Activated CD4-positive, alpha-beta memory T cell treated with anti-CD3 and anti-CD28 coated beads for 36 hours (primary cell): ENCODE measurements at regions of chr20 and their contacts with region 1.

Region 1: GRCh38 chr20:16761305-16761829 is 13.2 kb downstream of the OTOR start:
- DNase-seq: peak; percentile 49
- H3K4me3 Mint-ChIP-seq: no peak overlapping the region
- H3K27ac Mint-ChIP-seq: no peak overlapping the region
- H3K4me1 Mint-ChIP-seq: peaks cover 4% of the 10 kb centered on the region
- H3K27me3 Mint-ChIP-seq: peaks cover 11% of the 10 kb centered on the region

Region 2: DNA sequence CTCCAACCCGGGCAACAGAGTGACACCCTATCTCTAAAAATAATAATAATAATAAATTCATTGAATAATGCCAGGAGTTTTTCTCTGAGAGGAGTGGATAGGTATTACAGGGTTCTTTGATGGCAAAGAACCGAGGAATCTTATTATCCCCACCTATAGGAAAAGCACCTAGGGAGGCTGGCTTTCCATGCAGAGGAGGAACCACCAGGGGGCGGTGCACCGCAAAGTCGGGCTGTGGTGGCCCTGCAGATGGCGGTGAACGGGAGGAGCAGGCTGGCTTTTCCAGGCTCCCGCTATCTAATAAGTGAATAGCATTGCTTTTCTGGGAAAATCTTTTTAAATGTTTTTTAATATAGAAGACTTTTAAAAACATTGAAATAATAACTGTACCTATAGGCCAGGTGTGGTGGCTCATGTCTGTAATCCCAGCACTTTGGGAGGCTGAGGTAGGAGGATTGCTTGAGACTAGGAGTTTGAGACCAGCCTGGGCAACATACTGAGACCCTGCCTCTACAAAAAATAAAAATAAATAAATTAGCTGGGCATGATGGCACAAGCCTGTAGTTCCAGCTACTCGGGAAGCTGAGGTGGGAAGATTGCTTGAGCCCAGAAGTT is 1052.3 kb before region 1 on chr20:
- CTCF ChIA-PET with region 1: interaction called, 6 read pairs
- POLR2A ChIA-PET with region 1: no interaction called
- intact Hi-C with region 1: loop called (anchors 5 kb)
- DNase-seq: peak; percentile 52
- H3K4me3 Mint-ChIP-seq: no peak overlapping the region
- H3K27ac Mint-ChIP-seq: no peak overlapping the region
- H3K4me1 Mint-ChIP-seq: no peaks in the 10 kb centered on the region
- H3K27me3 Mint-ChIP-seq: no peaks in the 10 kb centered on the region

Region 3: GRCh38 chr20:16476032-16476431 is 285.3 kb before region 1 on chr20:
- CTCF ChIA-PET with region 1: interaction called, 4 read pairs
- POLR2A ChIA-PET with region 1: no interaction called
- intact Hi-C with region 1: loop called (anchors 5 kb)
- DNase-seq: no peak
- H3K4me3 Mint-ChIP-seq: no peak overlapping the region
- H3K27ac Mint-ChIP-seq: no peak overlapping the region
- H3K4me1 Mint-ChIP-seq: peaks cover 4% of the 10 kb centered on the region
- H3K27me3 Mint-ChIP-seq: no peaks in the 10 kb centered on the region

Region 4: DNA sequence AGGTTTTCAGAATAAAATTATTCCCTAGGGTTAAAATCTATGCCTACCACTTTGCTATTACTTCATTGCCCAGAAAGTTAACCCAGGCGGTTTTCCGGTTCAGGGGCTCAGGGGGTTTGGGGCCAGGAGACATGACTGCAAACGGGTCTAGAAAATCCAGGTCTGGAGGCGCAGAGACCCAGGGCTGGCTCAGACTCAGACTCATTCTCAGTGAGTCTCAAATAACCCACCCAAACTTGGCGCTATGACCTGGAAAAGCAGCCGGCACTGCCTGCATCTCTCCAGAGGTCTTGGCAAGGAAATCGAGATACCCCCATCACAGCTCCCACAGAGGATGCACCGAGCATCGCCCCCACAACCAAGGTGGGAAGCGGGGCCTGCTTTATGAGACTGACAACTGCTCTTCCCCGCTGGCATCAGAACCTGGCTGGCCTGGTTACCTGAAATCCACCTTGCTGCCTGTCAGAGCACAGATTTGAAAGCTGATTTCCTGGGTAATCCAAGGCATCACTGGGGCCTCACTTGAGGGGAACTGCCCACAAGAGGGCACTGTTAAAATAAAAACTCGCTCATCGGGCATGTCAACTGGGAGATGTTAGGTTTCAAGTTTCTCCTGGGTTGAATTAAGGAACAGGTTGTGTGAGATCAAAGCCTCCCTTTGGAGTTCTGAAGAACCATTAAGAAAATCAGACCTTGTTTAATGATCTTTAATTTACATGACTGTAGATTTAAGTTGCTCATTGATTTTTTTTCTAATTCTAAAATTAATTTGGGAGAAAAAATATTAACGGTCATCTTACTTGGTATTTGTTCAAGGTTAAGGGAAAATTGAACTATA is 243.2 kb before region 1 on chr20:
- CTCF ChIA-PET with region 1: interaction called, 35 read pairs
- POLR2A ChIA-PET with region 1: no interaction called
- intact Hi-C with region 1: loop called (anchors 2 kb)
- DNase-seq: peak; percentile 37
- H3K4me3 Mint-ChIP-seq: no peak overlapping the region
- H3K27ac Mint-ChIP-seq: no peak overlapping the region
- H3K4me1 Mint-ChIP-seq: no peaks in the 10 kb centered on the region
- H3K27me3 Mint-ChIP-seq: no peaks in the 10 kb centered on the region

Region 5: DNA sequence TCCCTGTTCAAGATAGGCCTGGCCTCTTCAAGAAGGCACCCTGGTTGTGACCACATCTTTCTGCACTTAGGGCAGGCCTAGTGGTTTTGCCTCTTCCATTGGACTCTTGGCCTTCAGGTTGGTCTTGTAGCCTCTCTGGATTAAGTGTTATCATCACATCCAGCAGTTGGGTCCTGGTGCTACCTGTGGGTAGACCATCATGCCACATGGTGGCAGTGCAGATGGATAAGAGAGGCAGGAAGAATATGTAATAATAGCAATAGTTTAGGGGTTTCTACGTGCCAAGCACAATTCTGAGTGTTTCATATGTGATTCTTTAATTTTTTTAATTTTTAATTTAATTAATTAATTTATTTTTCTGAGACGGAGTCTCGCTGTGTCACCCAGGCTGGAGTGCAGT is 60.1 kb before region 1 on chr20:
- CTCF ChIA-PET with region 1: interaction called, 21 read pairs
- POLR2A ChIA-PET with region 1: no interaction called
- intact Hi-C with region 1: loop called (anchors 1 kb)
- DNase-seq: peak; percentile 24
- H3K4me3 Mint-ChIP-seq: no peak overlapping the region
- H3K27ac Mint-ChIP-seq: no peak overlapping the region
- H3K4me1 Mint-ChIP-seq: no peaks in the 10 kb centered on the region
- H3K27me3 Mint-ChIP-seq: peaks cover 5% of the 10 kb centered on the region

Region 6: DNA sequence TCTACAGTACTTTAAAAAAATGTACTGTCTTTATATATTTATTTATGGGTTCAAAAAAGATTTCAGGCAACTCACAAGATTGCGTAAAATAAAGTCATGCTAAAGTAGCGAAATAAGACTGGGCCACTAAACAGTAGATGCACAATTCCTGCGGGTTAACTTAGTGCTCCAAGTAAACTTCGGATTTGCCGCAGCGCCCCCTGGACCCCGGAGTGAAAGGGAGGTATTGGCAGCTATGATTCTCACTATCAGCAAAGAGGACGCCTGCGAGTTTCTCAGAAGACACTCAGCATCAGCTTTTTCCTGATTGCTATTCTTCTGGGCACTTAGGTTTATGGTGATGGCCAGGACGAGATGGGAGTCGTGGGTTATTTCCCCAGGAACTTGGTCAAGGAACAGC is 11.8 kb before region 1 on chr20:
- CTCF ChIA-PET with region 1: interaction called, 23 read pairs
- POLR2A ChIA-PET with region 1: no interaction called
- intact Hi-C with region 1: no loop called
- DNase-seq: no peak
- H3K4me3 Mint-ChIP-seq: no peak overlapping the region
- H3K27ac Mint-ChIP-seq: no peak overlapping the region
- H3K4me1 Mint-ChIP-seq: no peaks in the 10 kb centered on the region
- H3K27me3 Mint-ChIP-seq: peaks cover 5% of the 10 kb centered on the region